ENCODE measurements at regions of chr1 and their contacts with region 1.

Region 1: GRCh38 chr1:222579316-222579715 is 10.4 kb downstream of the TAF1A start:
- DNase-seq: no peak
- ATAC-seq: no peak
- H3K4me3 ChIP-seq: no peak overlapping the region
- H3K4me3 Mint-ChIP-seq: no peak overlapping the region
- H3K27ac ChIP-seq: no peak overlapping the region
- H3K27ac Mint-ChIP-seq: no peak overlapping the region
- H3K4me1 ChIP-seq: no peaks in the 10 kb centered on the region
- H3K4me1 Mint-ChIP-seq: no peaks in the 10 kb centered on the region
- H3K27me3 ChIP-seq: no peaks in the 10 kb centered on the region
- H3K27me3 Mint-ChIP-seq: no peaks in the 10 kb centered on the region
- CTCF ChIP-seq: no peak

Region 2: GRCh38 chr1:222561656-222562055 is 17.7 kb before region 1 on chr1:
- CTCF ChIA-PET with region 1: no interaction called
- POLR2A ChIA-PET with region 1: no interaction called
- intact Hi-C with region 1: loop called in 1 of 2 experiments (anchors 2 kb)
- DNase-seq: no peak
- ATAC-seq: no peak
- H3K4me3 ChIP-seq: no peak overlapping the region
- H3K4me3 Mint-ChIP-seq: no peak overlapping the region
- H3K27ac ChIP-seq: no peak overlapping the region
- H3K27ac Mint-ChIP-seq: no peak overlapping the region
- H3K4me1 ChIP-seq: no peaks in the 10 kb centered on the region
- H3K4me1 Mint-ChIP-seq: no peaks in the 10 kb centered on the region
- H3K27me3 ChIP-seq: no peaks in the 10 kb centered on the region
- H3K27me3 Mint-ChIP-seq: no peaks in the 10 kb centered on the region
- CTCF ChIP-seq: no peak